Naive thymus-derived CD4-positive, alpha-beta T cell (primary cell): ENCODE measurements at regions of chr18 and their contacts with region 1.

Region 1: GRCh38 chr18:47930931-47931717 is 665 bp upstream of the SMAD2 start:
- DNase-seq: peak; percentile 91 to 96 (median 94)
- ATAC-seq: peak; percentile 88
- H3K4me3 ChIP-seq: peak overlapping the region; percentile 64
- H3K4me3 Mint-ChIP-seq: peak overlapping the region; percentile 78 to 92 (median 88)
- H3K27ac ChIP-seq: peak overlapping the region; percentile 91
- H3K27ac Mint-ChIP-seq: peak overlapping the region; percentile 89 to 98 (median 94)
- H3K4me1 ChIP-seq: peaks cover 19 to 36% of the 10 kb centered on the region in 2 donors
- H3K4me1 Mint-ChIP-seq: peaks cover 39 to 46% (median 42%) of the 10 kb centered on the region in 7 donors
- H3K27me3 ChIP-seq: no peaks in the 10 kb centered on the region
- H3K27me3 Mint-ChIP-seq: peaks cover 0 to 13% (median 0%) of the 10 kb centered on the region in 5 donors

Region 2: GRCh38 chr18:45967007-45967706 is 1964.0 kb before region 1 on chr18 and contains the start of gene EPG5:
- CTCF ChIA-PET with region 1: no interaction called
- POLR2A ChIA-PET with region 1: no interaction called
- intact Hi-C with region 1: loop called in 1 of 2 experiments (anchors 10 kb)
- DNase-seq: peak; percentile 73 to 91 (median 90)
- ATAC-seq: peak; percentile 98
- H3K4me3 ChIP-seq: peak within 1 kb of the TSS; percentile 79
- H3K4me3 Mint-ChIP-seq: peak within 1 kb of the TSS; percentile 94 to 100 (median 97)
- H3K27ac ChIP-seq: peak within 1 kb of the TSS; percentile 86
- H3K27ac Mint-ChIP-seq: peak within 1 kb of the TSS; percentile 84 to 98 (median 97)
- H3K4me1 ChIP-seq: peaks cover 14 to 25% of the 10 kb centered on the region in 2 donors
- H3K4me1 Mint-ChIP-seq: peaks cover 33 to 55% (median 47%) of the 10 kb centered on the region in 7 donors
- H3K27me3 ChIP-seq: no peaks in the 10 kb centered on the region
- H3K27me3 Mint-ChIP-seq: no peaks in the 10 kb centered on the region
- total RNA-seq, gene EPG5: 26.0 to 54.8 (median 44.7) TPM

Region 3: GRCh38 chr18:47150029-47150823 is 780.9 kb before region 1 on chr18 and contains the start of gene HDHD2:
- CTCF ChIA-PET with region 1: no interaction called
- POLR2A ChIA-PET with region 1: interaction called, 10 read pairs
- intact Hi-C with region 1: loop called (anchors 10 kb)
- DNase-seq: peak; percentile 52 to 90 (median 66)
- ATAC-seq: peak; percentile 86
- H3K4me3 ChIP-seq: peak within 1 kb of the TSS; percentile 88
- H3K4me3 Mint-ChIP-seq: peak within 1 kb of the TSS; percentile 93 to 99 (median 98)
- H3K27ac ChIP-seq: peak within 1 kb of the TSS; percentile 83
- H3K27ac Mint-ChIP-seq: peak within 1 kb of the TSS; percentile 96 to 100 (median 97)
- H3K4me1 ChIP-seq: peaks cover 18 to 24% of the 10 kb centered on the region in 2 donors
- H3K4me1 Mint-ChIP-seq: peaks cover 28 to 64% (median 57%) of the 10 kb centered on the region in 7 donors
- H3K27me3 ChIP-seq: no peaks in the 10 kb centered on the region
- H3K27me3 Mint-ChIP-seq: no peaks in the 10 kb centered on the region
- total RNA-seq, gene HDHD2: 22.7 to 45.7 (median 38.0) TPM

Region 4: DNA sequence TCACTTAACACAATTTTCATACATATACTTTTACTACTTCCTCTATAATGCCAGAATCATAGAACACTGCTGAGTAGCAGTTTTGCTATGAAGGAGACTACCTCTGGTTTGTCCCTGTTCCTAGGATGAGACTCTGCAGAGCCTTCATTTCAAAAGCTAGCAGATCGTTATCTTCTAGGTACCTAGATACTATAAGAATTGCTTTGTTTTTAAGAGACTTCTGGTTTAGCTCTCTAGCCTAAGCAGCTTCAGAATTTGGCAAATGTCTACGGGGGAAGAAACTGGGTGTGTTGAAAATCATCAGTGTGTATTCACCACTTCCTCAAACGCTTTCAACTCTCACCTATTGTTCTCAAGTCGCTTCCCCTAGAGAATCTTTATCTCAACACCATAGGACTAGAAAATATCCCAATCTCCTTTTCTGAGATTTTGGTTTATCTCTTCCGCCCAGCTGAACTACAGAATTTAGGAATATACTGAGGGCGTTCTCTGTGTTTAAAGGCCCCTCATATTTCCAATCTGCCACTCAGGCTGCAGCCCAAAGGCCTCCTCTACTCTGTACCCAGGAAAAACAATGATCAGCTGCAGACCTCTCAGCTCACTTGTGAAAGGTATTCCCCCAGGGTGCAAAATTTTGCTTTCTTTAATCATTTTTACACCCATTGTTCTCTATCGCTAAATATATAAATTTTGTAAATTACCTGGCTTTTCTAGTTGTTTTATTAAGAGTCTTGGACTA is 29.3 kb before region 1 on chr18:
- CTCF ChIA-PET with region 1: no interaction called
- POLR2A ChIA-PET with region 1: interaction called, 57 read pairs
- intact Hi-C with region 1: loop called (anchors 1 kb)
- DNase-seq: peak in 7 of 9 donors; percentile 57 to 80 (median 71)
- ATAC-seq: peak; percentile 95
- H3K4me3 ChIP-seq: peak overlapping the region; percentile 35
- H3K4me3 Mint-ChIP-seq: peak overlapping the region; percentile 58 to 78 (median 71)
- H3K27ac ChIP-seq: peak overlapping the region; percentile 54
- H3K27ac Mint-ChIP-seq: peak overlapping the region; percentile 80 to 92 (median 88)
- H3K4me1 ChIP-seq: peaks cover 19 to 36% of the 10 kb centered on the region in 2 donors
- H3K4me1 Mint-ChIP-seq: peaks cover 51 to 94% (median 87%) of the 10 kb centered on the region in 7 donors
- H3K27me3 ChIP-seq: no peaks in the 10 kb centered on the region
- H3K27me3 Mint-ChIP-seq: no peaks in the 10 kb centered on the region

Region 5: DNA sequence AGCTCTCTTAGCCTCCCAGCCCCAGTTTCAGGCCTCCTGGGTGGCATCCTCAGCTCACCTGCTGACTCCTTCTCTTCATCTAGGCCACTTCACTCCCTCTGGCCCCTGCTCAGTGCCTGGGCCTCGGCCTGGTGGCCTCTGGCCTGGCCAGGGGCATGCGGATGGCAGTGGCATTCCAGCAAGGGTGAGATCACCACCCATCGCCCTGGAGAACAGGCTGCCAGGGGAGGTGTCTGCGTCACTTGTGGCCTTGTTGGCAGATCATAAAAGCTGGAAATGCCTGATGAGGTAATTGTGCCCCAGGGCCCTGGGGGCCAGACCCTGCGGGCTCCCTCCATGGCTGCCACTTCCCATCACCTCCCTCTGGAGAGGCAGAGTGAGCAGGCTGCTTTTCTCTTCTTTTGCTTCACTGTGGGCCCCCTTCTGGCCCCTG is 71.8 kb after region 1 on chr18:
- CTCF ChIA-PET with region 1: no interaction called
- POLR2A ChIA-PET with region 1: no interaction called
- intact Hi-C with region 1: loop called (anchors 1 kb)
- DNase-seq: no peak
- ATAC-seq: no peak
- H3K4me3 ChIP-seq: no peak overlapping the region
- H3K4me3 Mint-ChIP-seq: no peak overlapping the region
- H3K27ac ChIP-seq: no peak overlapping the region
- H3K27ac Mint-ChIP-seq: no peak overlapping the region
- H3K4me1 ChIP-seq: peaks cover 2 to 5% of the 10 kb centered on the region in 2 donors
- H3K4me1 Mint-ChIP-seq: peaks cover 0 to 5% (median 0%) of the 10 kb centered on the region in 7 donors
- H3K27me3 ChIP-seq: no peaks in the 10 kb centered on the region
- H3K27me3 Mint-ChIP-seq: peaks cover 0 to 9% (median 7%) of the 10 kb centered on the region in 5 donors

Region 6: DNA sequence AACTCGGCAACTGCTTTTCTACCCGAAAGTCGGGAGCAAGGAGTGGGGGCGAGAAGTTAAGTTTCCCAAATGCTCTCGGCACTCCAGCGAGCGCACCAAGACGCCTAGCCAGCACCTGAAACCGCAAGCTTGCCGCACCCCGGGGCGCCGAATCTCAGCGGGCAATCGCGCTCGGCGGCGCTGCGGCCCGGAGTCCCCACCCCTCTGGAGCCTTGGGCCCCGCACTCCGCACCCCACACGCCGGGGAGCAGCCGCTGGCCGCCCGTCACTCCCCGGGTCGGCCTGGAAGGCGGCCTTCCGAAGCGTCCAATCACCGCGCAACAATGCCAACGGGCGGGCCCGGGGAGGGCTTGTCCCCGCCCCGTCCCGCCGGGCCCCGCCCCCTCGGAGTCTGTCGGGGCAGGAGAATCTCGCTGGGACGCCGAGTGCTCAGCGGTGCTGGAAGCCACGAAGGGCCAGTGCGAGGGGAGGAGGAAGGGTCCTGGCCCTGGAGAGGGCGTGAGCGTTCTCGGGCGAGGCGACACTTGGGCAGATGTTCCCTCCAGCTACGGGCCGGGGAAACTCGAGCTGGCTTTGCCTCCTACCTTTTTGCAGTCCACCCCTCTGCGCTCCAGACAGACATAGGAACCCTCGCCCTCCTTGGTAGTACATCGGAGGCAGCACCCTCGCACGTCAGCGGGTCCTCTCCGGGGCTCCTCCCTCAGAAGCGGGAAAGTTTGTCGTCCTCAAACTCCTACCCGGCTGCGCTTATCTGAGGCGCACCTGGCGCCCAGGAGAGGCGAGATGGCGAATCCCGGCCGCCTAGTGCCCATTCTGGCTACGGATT is 479.2 kb after region 1 on chr18:
- CTCF ChIA-PET with region 1: no interaction called
- POLR2A ChIA-PET with region 1: no interaction called
- intact Hi-C with region 1: loop called in 1 of 2 experiments (anchors 5 kb)
- DNase-seq: peak in 6 of 9 donors; percentile 9 to 87 (median 36)
- ATAC-seq: peak; percentile 91
- H3K4me3 ChIP-seq: peak overlapping the region; percentile 43
- H3K4me3 Mint-ChIP-seq: peak overlapping the region; percentile 50 to 84 (median 76)
- H3K27ac ChIP-seq: no peak overlapping the region
- H3K27ac Mint-ChIP-seq: no peak overlapping the region
- H3K4me1 ChIP-seq: peaks cover 0 to 6% of the 10 kb centered on the region in 2 donors
- H3K4me1 Mint-ChIP-seq: peaks cover 4 to 20% (median 14%) of the 10 kb centered on the region in 7 donors
- H3K27me3 ChIP-seq: peaks cover 4 to 5% of the 10 kb centered on the region in 2 donors
- H3K27me3 Mint-ChIP-seq: peaks cover 69 to 75% (median 71%) of the 10 kb centered on the region in 5 donors

Region 7: GRCh38 chr18:48951448-48952286 is 1020.5 kb after region 1 on chr18:
- CTCF ChIA-PET with region 1: no interaction called
- POLR2A ChIA-PET with region 1: no interaction called
- intact Hi-C with region 1: loop called in 1 of 2 experiments (anchors 5 kb)
- DNase-seq: peak; percentile 59 to 79 (median 67)
- ATAC-seq: peak; percentile 69
- H3K4me3 ChIP-seq: peak overlapping the region; percentile 69
- H3K4me3 Mint-ChIP-seq: peak overlapping the region; percentile 84 to 97 (median 94)
- H3K27ac ChIP-seq: peak overlapping the region; percentile 76
- H3K27ac Mint-ChIP-seq: peak overlapping the region; percentile 87 to 99 (median 96)
- H3K4me1 ChIP-seq: peaks cover 26 to 38% of the 10 kb centered on the region in 2 donors
- H3K4me1 Mint-ChIP-seq: peaks cover 24 to 55% (median 44%) of the 10 kb centered on the region in 7 donors
- H3K27me3 ChIP-seq: no peaks in the 10 kb centered on the region
- H3K27me3 Mint-ChIP-seq: peaks cover 0 to 11% (median 0%) of the 10 kb centered on the region in 5 donors